Endothelial cell of umbilical vein (primary cell): ENCODE measurements at regions of chr2 and their contacts with region 1.

Region 1: GRCh38 chr2:174764280-174765255 is at the start of gene CHRNA1:
- DNase-seq: peak; percentile 49
- H3K4me3 ChIP-seq: no peak within 1 kb of the TSS
- H3K27ac ChIP-seq: peak within 1 kb of the TSS; percentile 86
- H3K4me1 ChIP-seq: peaks cover 23% of the 10 kb centered on the region
- H3K27me3 ChIP-seq: no peaks in the 10 kb centered on the region
- CTCF ChIP-seq: no peak
- POLR2A ChIP-seq: no peak
- total RNA-seq, gene CHRNA1: 8.7 and 11.3 TPM in 2 replicates

Region 2: GRCh38 chr2:174914853-174915760 is 150.5 kb after region 1 on chr2:
- CTCF ChIA-PET with region 1: no interaction called
- POLR2A ChIA-PET with region 1: no interaction called
- dilution Hi-C with region 1: no loop called
- intact Hi-C with region 1: no loop called
- DNase-seq: peak; percentile 45
- H3K4me3 ChIP-seq: no peak overlapping the region
- H3K27ac ChIP-seq: no peak overlapping the region
- H3K4me1 ChIP-seq: no peaks in the 10 kb centered on the region
- H3K27me3 ChIP-seq: no peaks in the 10 kb centered on the region
- CTCF ChIP-seq: no peak
- POLR2A ChIP-seq: no peak

Region 3: DNA sequence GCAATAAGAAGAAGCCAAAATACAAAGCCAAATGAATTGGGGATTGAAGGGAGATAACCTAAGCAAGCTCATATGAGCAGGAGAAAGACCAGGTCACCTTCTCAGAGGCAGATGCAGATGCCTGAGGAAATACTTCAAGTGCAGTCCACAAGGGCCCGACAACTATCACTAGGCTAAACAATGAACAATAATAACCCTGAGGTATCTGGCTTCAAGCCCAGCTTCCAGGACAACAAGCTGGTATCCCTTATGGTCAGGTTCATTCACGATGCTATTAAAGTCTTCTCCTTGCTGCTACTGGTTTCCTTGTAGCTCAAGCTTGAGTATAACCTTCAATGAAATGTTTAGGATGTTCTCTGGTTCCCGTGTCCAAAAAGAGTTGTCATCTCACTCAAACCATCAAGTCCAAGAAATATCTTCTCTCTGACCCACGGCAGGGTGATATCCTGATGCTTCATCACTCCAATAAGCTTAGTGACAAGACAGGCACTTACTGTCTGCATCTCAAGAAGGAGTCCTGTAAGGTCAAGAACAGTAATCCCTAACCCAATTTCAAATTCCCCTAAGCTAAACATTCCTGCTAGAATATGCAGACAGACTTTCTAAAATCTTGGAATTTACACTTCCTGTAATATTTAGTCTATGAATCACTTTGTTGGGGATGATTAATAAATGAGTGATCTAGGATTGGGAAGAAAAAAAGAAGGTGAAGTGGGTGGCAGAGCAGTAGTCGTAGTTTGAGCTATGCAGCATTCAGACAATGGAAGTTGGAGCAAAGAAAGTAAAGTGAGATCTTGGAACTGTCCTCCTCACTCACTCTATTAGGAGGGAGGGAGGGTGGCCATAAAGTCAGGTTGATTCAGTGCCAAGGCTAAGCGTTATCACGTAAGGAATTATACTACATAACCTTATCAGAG is 207.6 kb after region 1 on chr2:
- CTCF ChIA-PET with region 1: no interaction called
- POLR2A ChIA-PET with region 1: no interaction called
- dilution Hi-C with region 1: no loop called
- intact Hi-C with region 1: no loop called
- DNase-seq: peak; percentile 96
- H3K4me3 ChIP-seq: peak overlapping the region in 1 of 3 experiments; percentile 34
- H3K27ac ChIP-seq: peak overlapping the region; percentile 93
- H3K4me1 ChIP-seq: peaks cover 34% of the 10 kb centered on the region
- H3K27me3 ChIP-seq: no peaks in the 10 kb centered on the region
- CTCF ChIP-seq: no peak
- POLR2A ChIP-seq: no peak

Region 4: GRCh38 chr2:174985630-174986029 is 221.1 kb after region 1 on chr2:
- CTCF ChIA-PET with region 1: interaction called, 584 read pairs
- POLR2A ChIA-PET with region 1: no interaction called
- dilution Hi-C with region 1: no loop called
- intact Hi-C with region 1: no loop called
- DNase-seq: peak; percentile 55
- H3K4me3 ChIP-seq: no peak overlapping the region
- H3K27ac ChIP-seq: no peak overlapping the region
- H3K4me1 ChIP-seq: no peaks in the 10 kb centered on the region
- H3K27me3 ChIP-seq: no peaks in the 10 kb centered on the region
- CTCF ChIP-seq: peak; percentile 21 to 36
- POLR2A ChIP-seq: no peak

Region 5: DNA sequence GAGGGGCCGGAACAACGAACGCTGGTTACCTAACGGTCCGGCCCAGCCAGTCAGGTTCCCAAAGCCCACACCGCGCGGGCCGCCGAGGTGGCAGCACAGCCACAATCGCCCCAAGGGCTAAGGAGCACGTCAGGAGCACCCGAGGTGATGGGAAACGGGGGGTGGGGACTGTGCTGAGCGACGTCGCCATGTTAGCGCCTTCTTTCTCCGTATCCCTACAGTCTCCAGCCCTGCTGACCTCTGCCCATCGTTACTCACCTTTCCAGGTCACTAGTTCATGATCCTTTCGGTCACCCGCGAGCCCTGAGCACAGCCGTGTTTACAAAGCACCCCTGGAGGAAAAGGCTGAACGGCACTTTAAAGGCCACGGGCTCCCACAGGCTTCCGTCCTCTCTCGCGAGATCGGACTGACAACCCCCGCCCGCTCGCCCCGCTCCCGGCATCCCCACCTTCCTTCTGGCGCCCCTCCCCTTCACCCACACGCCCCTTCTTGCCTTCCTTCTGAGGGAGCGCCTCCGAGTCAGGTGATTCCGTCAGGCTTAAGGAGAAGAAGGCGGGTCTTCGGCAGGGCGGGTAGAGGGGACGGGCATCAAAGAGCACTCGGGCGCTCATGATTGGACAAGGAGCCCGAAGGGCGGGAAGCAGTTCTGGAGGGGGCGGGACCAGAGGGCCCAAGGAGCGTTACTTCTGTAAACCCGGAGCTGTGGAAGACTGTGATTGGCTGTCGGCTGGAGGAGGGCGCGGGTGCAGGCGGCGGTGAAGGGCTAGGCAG is 403.4 kb after region 1 on chr2 and contains the start of gene ATF2:
- CTCF ChIA-PET with region 1: no interaction called
- POLR2A ChIA-PET with region 1: no interaction called
- dilution Hi-C with region 1: no loop called
- intact Hi-C with region 1: loop called (anchors 10 kb)
- DNase-seq: peak; percentile 100
- H3K4me3 ChIP-seq: peak within 1 kb of the TSS; percentile 86 to 99 (median 90)
- H3K27ac ChIP-seq: peak within 1 kb of the TSS; percentile 93
- H3K4me1 ChIP-seq: peaks cover 11% of the 10 kb centered on the region
- H3K27me3 ChIP-seq: no peaks in the 10 kb centered on the region
- CTCF ChIP-seq: no peak
- POLR2A ChIP-seq: peak; percentile 64
- total RNA-seq, gene ATF2: 55.9 and 57.1 TPM in 2 replicates

Region 6: GRCh38 chr2:175181104-175181876 is 416.7 kb after region 1 on chr2 and contains the start of gene ATP5MC3:
- CTCF ChIA-PET with region 1: no interaction called
- POLR2A ChIA-PET with region 1: no interaction called
- dilution Hi-C with region 1: no loop called
- intact Hi-C with region 1: loop called (anchors 2 kb)
- DNase-seq: peak; percentile 86
- H3K4me3 ChIP-seq: peak within 1 kb of the TSS; percentile 49 to 74 (median 69)
- H3K27ac ChIP-seq: peak within 1 kb of the TSS; percentile 48
- H3K4me1 ChIP-seq: peaks cover 6% of the 10 kb centered on the region
- H3K27me3 ChIP-seq: no peaks in the 10 kb centered on the region
- CTCF ChIP-seq: peak in 1 of 2 donors; percentile 25
- POLR2A ChIP-seq: peak; percentile 66
- total RNA-seq, gene ATP5MC3: 201 and 233 TPM in 2 replicates